ENCODE measurements at regions of chr11 and their contacts with region 1.

Region 1: DNA sequence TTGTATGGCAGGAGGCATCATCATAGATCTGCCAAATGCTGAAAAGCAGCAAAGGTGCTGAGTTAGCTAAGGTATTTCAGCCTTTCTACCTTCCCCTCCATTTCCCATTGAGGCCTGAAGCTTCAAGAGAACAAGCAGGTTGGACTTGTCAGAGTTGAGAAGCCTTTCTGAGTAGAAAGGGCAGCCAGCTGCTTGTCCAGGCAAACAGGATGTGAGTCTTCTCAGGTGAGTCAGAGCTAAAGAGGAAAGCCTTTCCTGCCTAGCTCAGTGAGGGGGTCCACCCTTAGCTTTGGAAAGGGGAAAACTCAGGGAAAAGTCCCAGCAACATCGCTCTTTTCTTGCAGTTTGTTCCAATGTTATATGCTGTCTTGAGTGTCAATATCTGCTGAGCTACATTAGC is 13.2 kb upstream of the MPZL2 start:
- DNase-seq: no peak
- H3K4me3 Mint-ChIP-seq: no peak overlapping the region
- H3K27ac Mint-ChIP-seq: no peak overlapping the region
- H3K4me1 Mint-ChIP-seq: peaks cover 57% of the 10 kb centered on the region
- H3K27me3 Mint-ChIP-seq: no peaks in the 10 kb centered on the region

Region 2: GRCh38 chr11:118184784-118185579 is 92.3 kb before region 1 on chr11:
- intact Hi-C with region 1: no loop called
- DNase-seq: no peak
- H3K4me3 Mint-ChIP-seq: no peak overlapping the region
- H3K27ac Mint-ChIP-seq: no peak overlapping the region
- H3K4me1 Mint-ChIP-seq: peaks cover 5% of the 10 kb centered on the region
- H3K27me3 Mint-ChIP-seq: peaks cover 30% of the 10 kb centered on the region

Region 3: DNA sequence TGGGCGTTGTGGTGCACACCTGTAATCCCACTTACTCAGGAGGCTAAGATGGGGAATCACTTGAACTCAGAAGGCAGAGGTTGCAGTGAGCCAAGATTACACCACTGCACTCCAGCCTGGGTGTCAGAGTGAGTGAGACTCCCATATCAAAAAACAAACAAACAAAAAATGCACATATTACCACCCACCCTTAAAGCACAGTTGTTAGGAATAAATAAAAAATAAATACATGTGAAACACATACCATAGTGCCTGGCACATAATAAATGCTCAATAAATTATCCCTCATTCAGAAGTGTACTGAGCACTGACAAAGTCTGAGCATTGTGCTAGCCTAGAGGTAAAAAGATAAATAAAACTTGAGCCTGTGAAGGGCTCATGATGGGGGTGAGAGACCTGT is 43.5 kb before region 1 on chr11:
- intact Hi-C with region 1: no loop called
- DNase-seq: no peak
- H3K4me3 Mint-ChIP-seq: no peak overlapping the region
- H3K27ac Mint-ChIP-seq: peak overlapping the region; percentile 78
- H3K4me1 Mint-ChIP-seq: peaks cover 29% of the 10 kb centered on the region
- H3K27me3 Mint-ChIP-seq: no peaks in the 10 kb centered on the region

Region 4: DNA sequence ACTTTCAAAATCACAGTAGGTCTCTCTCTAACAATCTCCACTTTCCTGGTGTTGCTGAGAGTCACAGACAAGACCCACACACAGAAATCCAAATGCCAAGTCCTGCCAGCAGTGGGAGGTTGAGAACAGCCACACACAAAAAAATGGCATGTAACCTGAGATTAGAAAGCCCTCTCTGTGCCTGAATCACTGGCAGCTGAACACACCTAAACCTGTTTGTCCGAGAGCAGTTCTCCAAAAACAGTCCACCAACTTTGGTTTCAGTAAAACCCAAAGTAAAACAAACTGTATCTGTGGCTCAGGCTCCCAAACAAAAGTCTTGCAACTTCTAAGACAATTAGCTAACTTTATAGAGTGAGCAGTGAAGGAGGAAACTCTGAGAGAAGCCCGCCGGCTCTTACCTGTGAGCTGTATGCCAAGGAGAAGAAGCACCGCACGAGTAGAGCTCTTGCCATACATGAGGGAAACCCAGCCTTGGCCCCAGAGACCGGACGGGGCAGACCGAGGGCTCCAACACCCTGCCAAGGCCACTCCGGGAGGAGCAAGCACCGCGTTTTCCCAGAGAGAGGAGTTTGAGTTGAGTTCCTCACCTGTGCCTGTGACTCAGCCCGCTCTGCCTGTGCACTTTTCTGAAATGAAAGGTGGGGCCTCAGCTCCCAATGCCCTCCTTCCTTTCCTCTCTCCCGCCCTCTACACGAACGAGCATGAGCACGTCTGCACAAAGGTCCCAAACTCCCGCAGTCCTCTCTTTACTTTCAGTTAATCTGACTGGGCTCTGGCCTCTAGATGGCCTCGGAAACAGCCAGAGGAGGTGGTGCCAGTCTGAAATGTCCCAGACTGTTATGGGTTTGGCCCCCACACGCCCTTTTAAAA is 13.4 kb before region 1 on chr11 and contains the start of gene MPZL2:
- intact Hi-C with region 1: loop called (anchors 2 kb)
- DNase-seq: no peak
- H3K4me3 Mint-ChIP-seq: peak within 1 kb of the TSS; percentile 80
- H3K27ac Mint-ChIP-seq: peak within 1 kb of the TSS; percentile 41
- H3K4me1 Mint-ChIP-seq: peaks cover 58% of the 10 kb centered on the region
- H3K27me3 Mint-ChIP-seq: peaks cover 6% of the 10 kb centered on the region
- total RNA-seq, gene MPZL2: 13.2 and 15.9 TPM in 2 replicates

Region 5: GRCh38 chr11:118359295-118359958 is 82.1 kb after region 1 on chr11 and contains the start of gene UBE4A:
- intact Hi-C with region 1: no loop called
- DNase-seq: peak; percentile 94
- H3K4me3 Mint-ChIP-seq: peak within 1 kb of the TSS; percentile 95
- H3K27ac Mint-ChIP-seq: peak within 1 kb of the TSS; percentile 89
- H3K4me1 Mint-ChIP-seq: peaks cover 39% of the 10 kb centered on the region
- H3K27me3 Mint-ChIP-seq: no peaks in the 10 kb centered on the region
- total RNA-seq, gene UBE4A: 44.1 and 46.0 TPM in 2 replicates

Measured in activated T-helper 1 cell treated with anti-CD3 and anti-CD28 coated beads, Interleukin-12 subunit alpha, Interleukin-12 subunit beta, Interleukin-2, Interleukin-4 antibody, amounts not matched to agents 30 ng/mL and 10 ng/mL and 1 ng/mL, durations not matched to agents 14 hours and 24 hours and 36 hours (primary cell).